Cardiac septum (tissue), 1 donor: ENCODE measurements at regions of chr17 and their contacts with region 1.

Region 1: GRCh38 chr17:56939901-56940343 is 20.9 kb downstream of the COIL start:
- DNase-seq: no peak

Region 2: GRCh38 chr17:56819431-56820145 is 120.3 kb before region 1 on chr17:
- intact Hi-C with region 1: loop called (anchors 1 kb)
- DNase-seq: no peak